ENCODE measurements at regions of chr2 and their contacts with region 1.

Region 1: DNA sequence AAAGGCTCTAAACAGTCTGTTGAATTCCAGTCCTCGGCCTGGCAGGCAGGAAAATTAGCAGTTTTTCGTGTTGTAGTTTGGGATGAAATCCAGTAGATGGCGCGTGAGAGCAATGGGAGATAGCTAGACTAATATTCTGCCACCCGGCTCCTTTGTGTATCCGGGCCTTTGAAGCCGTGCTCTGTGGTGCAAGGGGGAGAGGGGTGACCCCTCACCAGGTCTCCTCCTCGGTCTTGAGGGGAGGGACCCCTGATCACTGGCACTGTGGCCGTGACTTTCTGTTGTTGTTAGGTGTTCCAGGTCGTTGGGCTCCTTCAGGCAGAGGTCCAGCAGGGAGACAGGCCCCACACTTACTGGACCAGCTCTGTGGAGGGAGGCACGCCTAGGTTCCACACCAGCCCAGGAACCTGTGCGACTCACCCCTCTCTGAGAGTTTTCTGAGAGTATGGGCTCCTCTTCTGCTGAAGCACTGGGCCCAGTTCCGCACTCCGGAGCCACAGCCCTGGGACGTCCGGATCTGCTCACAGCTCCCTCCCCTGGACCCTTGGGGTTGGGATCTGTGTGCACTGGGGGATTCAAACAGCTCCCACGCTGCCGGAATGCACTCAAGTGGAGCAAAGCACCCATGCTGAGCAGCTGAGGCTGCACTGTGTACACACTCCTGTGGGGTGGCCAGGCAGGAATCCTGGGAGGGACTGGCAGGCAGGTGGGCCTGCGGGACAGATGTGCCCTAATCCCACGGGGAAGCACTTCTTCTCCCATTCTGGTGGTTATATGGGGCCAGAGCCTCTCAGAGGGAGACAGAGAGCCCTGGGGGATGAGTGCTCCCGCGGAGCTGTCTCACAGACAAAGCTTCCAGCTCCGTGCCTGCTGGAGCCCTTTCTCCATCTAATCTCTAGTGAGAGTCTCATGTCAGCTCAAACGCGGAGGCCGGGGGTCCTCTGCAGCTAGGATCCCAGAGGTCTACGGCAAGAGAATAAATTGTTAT is 8.8 kb downstream of the GKN2 start:
- DNase-seq: peak in 32 of 35 experiments; percentile 2 to 76 (median 36)
- ATAC-seq: peak in 3 of 4 experiments; percentile 60 to 74 (median 65)
- H3K4me3 ChIP-seq: no peak overlapping the region
- H3K4me3 Mint-ChIP-seq: no peak overlapping the region
- H3K27ac ChIP-seq: no peak overlapping the region
- H3K27ac Mint-ChIP-seq: no peak overlapping the region
- H3K4me1 ChIP-seq: peaks cover 0 to 4% of the 10 kb centered on the region in 2 experiments
- H3K4me1 Mint-ChIP-seq: peaks cover 3 to 7% (median 4%) of the 10 kb centered on the region in 3 donors
- H3K27me3 ChIP-seq: peaks cover 0 to 11% of the 10 kb centered on the region in 2 experiments
- H3K27me3 Mint-ChIP-seq: peaks cover 36 to 39% of the 10 kb centered on the region in 2 donors

Region 2: GRCh38 chr2:68994864-68995263 is 51.0 kb after region 1 on chr2:
- CTCF ChIA-PET with region 1: no interaction called
- POLR2A ChIA-PET with region 1: no interaction called
- DNase-seq: no peak
- ATAC-seq: no peak
- H3K4me3 ChIP-seq: no peak overlapping the region
- H3K4me3 Mint-ChIP-seq: no peak overlapping the region
- H3K27ac ChIP-seq: no peak overlapping the region
- H3K27ac Mint-ChIP-seq: no peak overlapping the region
- H3K4me1 ChIP-seq: no peaks in the 10 kb centered on the region
- H3K4me1 Mint-ChIP-seq: no peaks in the 10 kb centered on the region
- H3K27me3 ChIP-seq: peaks cover 0 to 6% of the 10 kb centered on the region in 2 experiments
- H3K27me3 Mint-ChIP-seq: peaks cover 19 to 24% of the 10 kb centered on the region in 2 donors

Region 3: DNA sequence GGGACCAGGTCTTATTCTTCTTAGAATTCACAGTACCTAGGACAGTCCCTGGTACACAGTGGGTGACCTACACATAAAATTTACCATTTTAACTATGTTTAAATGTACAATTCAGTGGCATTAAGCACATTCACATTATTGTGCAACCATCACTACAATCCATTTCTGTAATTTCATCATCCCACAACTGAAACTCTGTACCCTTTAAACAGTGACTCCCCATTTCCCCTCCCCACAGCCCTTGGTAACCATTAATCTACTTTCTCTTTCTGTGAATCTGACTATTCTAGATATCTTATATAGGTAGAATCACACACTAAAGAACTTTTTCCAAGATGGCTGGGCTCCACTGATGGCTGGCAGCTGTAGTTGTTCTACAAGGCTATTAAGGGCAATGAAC is 401.6 kb after region 1 on chr2:
- CTCF ChIA-PET with region 1: no interaction called
- POLR2A ChIA-PET with region 1: interaction called in 1 of 2 experiments, 24 read pairs
- DNase-seq: no peak
- ATAC-seq: no peak
- H3K4me3 ChIP-seq: no peak overlapping the region
- H3K4me3 Mint-ChIP-seq: no peak overlapping the region
- H3K27ac ChIP-seq: no peak overlapping the region
- H3K27ac Mint-ChIP-seq: no peak overlapping the region
- H3K4me1 ChIP-seq: no peaks in the 10 kb centered on the region
- H3K4me1 Mint-ChIP-seq: no peaks in the 10 kb centered on the region
- H3K27me3 ChIP-seq: no peaks in the 10 kb centered on the region
- H3K27me3 Mint-ChIP-seq: no peaks in the 10 kb centered on the region

Region 4: GRCh38 chr2:69717861-69718273 is 774.0 kb after region 1 on chr2:
- CTCF ChIA-PET with region 1: interaction called in 1 of 2 experiments, 12 read pairs
- POLR2A ChIA-PET with region 1: no interaction called
- DNase-seq: no peak
- ATAC-seq: no peak
- H3K4me3 ChIP-seq: no peak overlapping the region
- H3K4me3 Mint-ChIP-seq: no peak overlapping the region
- H3K27ac ChIP-seq: no peak overlapping the region
- H3K27ac Mint-ChIP-seq: no peak overlapping the region
- H3K4me1 ChIP-seq: peaks cover 0 to 15% of the 10 kb centered on the region in 2 experiments
- H3K4me1 Mint-ChIP-seq: peaks cover 10 to 19% (median 14%) of the 10 kb centered on the region in 3 donors
- H3K27me3 ChIP-seq: no peaks in the 10 kb centered on the region
- H3K27me3 Mint-ChIP-seq: no peaks in the 10 kb centered on the region